B cell (primary cell): ENCODE measurements at regions of chr14 and their contacts with region 1.

Region 1: GRCh38 chr14:22822571-22823098 is 7.1 kb upstream of the MRPL52 start:
- DNase-seq: peak; percentile 87
- ATAC-seq: peak; percentile 67
- H3K4me3 ChIP-seq: peak overlapping the region; percentile 49 to 85 (median 56)
- H3K4me3 Mint-ChIP-seq: peak overlapping the region; percentile 88
- H3K27ac ChIP-seq: peak overlapping the region; percentile 65 to 71
- H3K27ac Mint-ChIP-seq: peak overlapping the region; percentile 94
- H3K4me1 ChIP-seq: peaks cover 31 to 47% of the 10 kb centered on the region in 2 donors
- H3K4me1 Mint-ChIP-seq: peaks cover 61% of the 10 kb centered on the region
- H3K27me3 ChIP-seq: no peaks in the 10 kb centered on the region
- H3K27me3 Mint-ChIP-seq: no peaks in the 10 kb centered on the region
- CTCF ChIP-seq: peak; percentile 82

Region 2: GRCh38 chr14:22713631-22713950 is 109.0 kb before region 1 on chr14:
- CTCF ChIA-PET with region 1: no interaction called
- POLR2A ChIA-PET with region 1: interaction called, 12 read pairs
- intact Hi-C with region 1: no loop called
- DNase-seq: no peak
- ATAC-seq: no peak
- H3K4me3 ChIP-seq: peak overlapping the region in 4 of 5 experiments; percentile 23 to 53 (median 45)
- H3K4me3 Mint-ChIP-seq: peak overlapping the region; percentile 90
- H3K27ac ChIP-seq: no peak overlapping the region
- H3K27ac Mint-ChIP-seq: no peak overlapping the region
- H3K4me1 ChIP-seq: peaks cover 5 to 6% of the 10 kb centered on the region in 2 donors
- H3K4me1 Mint-ChIP-seq: peaks cover 11% of the 10 kb centered on the region
- H3K27me3 ChIP-seq: peaks cover 0 to 21% (median 14%) of the 10 kb centered on the region in 4 experiments
- H3K27me3 Mint-ChIP-seq: peaks cover 33% of the 10 kb centered on the region
- CTCF ChIP-seq: no peak

Region 3: GRCh38 chr14:22766456-22767322 is 55.9 kb before region 1 on chr14 and contains the start of gene OXA1L:
- CTCF ChIA-PET with region 1: interaction called, 31 read pairs
- POLR2A ChIA-PET with region 1: no interaction called
- intact Hi-C with region 1: no loop called
- DNase-seq: peak; percentile 98
- ATAC-seq: peak; percentile 93
- H3K4me3 ChIP-seq: peak within 1 kb of the TSS; percentile 83 to 95 (median 92)
- H3K4me3 Mint-ChIP-seq: peak within 1 kb of the TSS; percentile 84
- H3K27ac ChIP-seq: peak within 1 kb of the TSS; percentile 84 to 89
- H3K27ac Mint-ChIP-seq: peak within 1 kb of the TSS; percentile 93
- H3K4me1 ChIP-seq: peaks cover 18 to 23% of the 10 kb centered on the region in 2 donors
- H3K4me1 Mint-ChIP-seq: peaks cover 34% of the 10 kb centered on the region
- H3K27me3 ChIP-seq: no peaks in the 10 kb centered on the region
- H3K27me3 Mint-ChIP-seq: no peaks in the 10 kb centered on the region
- CTCF ChIP-seq: no peak
- total RNA-seq, gene OXA1L: 186 and 201 TPM in 2 replicates

Region 4: DNA sequence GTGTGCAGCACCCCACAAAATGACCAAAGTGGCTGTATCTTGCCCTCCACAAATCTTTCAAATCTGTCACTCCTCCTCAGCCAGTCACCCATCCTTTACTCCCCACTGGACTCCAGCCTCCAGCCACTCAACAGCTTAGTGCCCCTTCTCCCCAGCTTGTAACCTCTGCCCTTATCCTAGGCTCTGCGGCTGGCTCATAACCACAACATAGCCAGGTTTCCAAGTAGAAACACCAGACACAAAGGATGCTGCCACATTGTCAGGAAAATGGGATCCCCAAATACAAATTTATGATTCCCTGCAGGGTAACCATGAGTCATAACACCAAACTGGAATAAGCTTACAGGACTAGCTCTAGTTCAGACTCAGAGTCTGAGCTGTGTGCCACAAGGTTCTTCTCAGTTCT is 41.0 kb before region 1 on chr14:
- CTCF ChIA-PET with region 1: interaction called, 14 read pairs
- POLR2A ChIA-PET with region 1: no interaction called
- intact Hi-C with region 1: loop called (anchors 2 kb)
- DNase-seq: no peak
- ATAC-seq: no peak
- H3K4me3 ChIP-seq: no peak overlapping the region
- H3K4me3 Mint-ChIP-seq: no peak overlapping the region
- H3K27ac ChIP-seq: no peak overlapping the region
- H3K27ac Mint-ChIP-seq: peak overlapping the region; percentile 71
- H3K4me1 ChIP-seq: peaks cover 0 to 5% of the 10 kb centered on the region in 2 donors
- H3K4me1 Mint-ChIP-seq: peaks cover 6% of the 10 kb centered on the region
- H3K27me3 ChIP-seq: no peaks in the 10 kb centered on the region
- H3K27me3 Mint-ChIP-seq: no peaks in the 10 kb centered on the region
- CTCF ChIP-seq: no peak

Region 5: GRCh38 chr14:22802860-22803686 is 19.6 kb before region 1 on chr14:
- CTCF ChIA-PET with region 1: interaction called, 129 read pairs
- POLR2A ChIA-PET with region 1: interaction called, 10 read pairs
- intact Hi-C with region 1: loop called (anchors 2 kb)
- DNase-seq: peak; percentile 55
- ATAC-seq: peak; percentile 85
- H3K4me3 ChIP-seq: peak overlapping the region in 1 of 5 experiments; percentile 5
- H3K4me3 Mint-ChIP-seq: peak overlapping the region; percentile 82
- H3K27ac ChIP-seq: peak overlapping the region; percentile 1 to 71
- H3K27ac Mint-ChIP-seq: peak overlapping the region; percentile 94
- H3K4me1 ChIP-seq: peaks cover 25 to 47% of the 10 kb centered on the region in 2 donors
- H3K4me1 Mint-ChIP-seq: peaks cover 79% of the 10 kb centered on the region
- H3K27me3 ChIP-seq: no peaks in the 10 kb centered on the region
- H3K27me3 Mint-ChIP-seq: no peaks in the 10 kb centered on the region
- CTCF ChIP-seq: no peak

Region 6: DNA sequence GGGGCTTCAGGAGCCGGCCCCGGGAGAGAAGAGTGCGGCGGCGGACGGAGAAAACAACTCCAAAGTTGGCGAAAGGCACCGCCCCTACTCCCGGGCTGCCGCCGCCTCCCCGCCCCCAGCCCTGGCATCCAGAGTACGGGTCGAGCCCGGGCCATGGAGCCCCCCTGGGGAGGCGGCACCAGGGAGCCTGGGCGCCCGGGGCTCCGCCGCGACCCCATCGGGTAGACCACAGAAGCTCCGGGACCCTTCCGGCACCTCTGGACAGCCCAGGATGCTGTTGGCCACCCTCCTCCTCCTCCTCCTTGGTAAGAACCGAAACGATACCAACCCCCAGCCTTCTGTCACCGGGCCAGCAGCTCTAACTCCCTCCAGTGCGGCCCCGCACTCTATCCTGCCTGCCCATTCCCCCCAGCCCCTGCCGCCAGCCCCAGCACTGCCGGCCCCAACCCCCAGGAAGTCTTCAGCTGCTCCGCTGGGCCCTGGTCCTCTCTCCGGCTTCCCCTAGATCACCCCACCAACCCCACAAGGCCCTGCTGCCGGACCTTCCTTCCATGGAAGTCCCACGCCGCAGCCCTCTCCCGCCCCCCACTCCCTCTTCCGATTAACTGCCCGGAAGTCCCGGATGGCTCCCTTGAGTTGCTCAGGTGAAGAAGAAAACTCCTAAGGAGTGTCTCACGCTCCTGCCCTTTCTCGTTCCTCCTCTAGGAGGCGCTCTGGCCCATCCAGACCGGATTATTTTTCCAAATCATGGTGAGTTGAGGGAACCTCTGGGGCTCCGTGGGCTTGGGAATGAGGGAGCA is 49.6 kb after region 1 on chr14:
- CTCF ChIA-PET with region 1: interaction called, 13 read pairs
- POLR2A ChIA-PET with region 1: no interaction called
- intact Hi-C with region 1: loop called (anchors 2 kb)
- DNase-seq: peak; percentile 83
- ATAC-seq: peak; percentile 22
- H3K4me3 ChIP-seq: peak overlapping the region; percentile 79 to 97 (median 92)
- H3K4me3 Mint-ChIP-seq: peak overlapping the region; percentile 96
- H3K27ac ChIP-seq: peak overlapping the region; percentile 84 to 88
- H3K27ac Mint-ChIP-seq: peak overlapping the region; percentile 98
- H3K4me1 ChIP-seq: peaks cover 19 to 35% of the 10 kb centered on the region in 2 donors
- H3K4me1 Mint-ChIP-seq: peaks cover 34% of the 10 kb centered on the region
- H3K27me3 ChIP-seq: no peaks in the 10 kb centered on the region
- H3K27me3 Mint-ChIP-seq: no peaks in the 10 kb centered on the region
- CTCF ChIP-seq: peak; percentile 90

Region 7: GRCh38 chr14:22900081-22900799 is 77.6 kb after region 1 on chr14:
- CTCF ChIA-PET with region 1: interaction called, 21 read pairs
- POLR2A ChIA-PET with region 1: interaction called, 4 read pairs
- intact Hi-C with region 1: loop called (anchors 1 kb)
- DNase-seq: peak; percentile 81
- ATAC-seq: peak; percentile 76
- H3K4me3 ChIP-seq: no peak overlapping the region
- H3K4me3 Mint-ChIP-seq: no peak overlapping the region
- H3K27ac ChIP-seq: peak overlapping the region in 1 of 2 donors; percentile 38
- H3K27ac Mint-ChIP-seq: peak overlapping the region; percentile 10
- H3K4me1 ChIP-seq: peaks cover 3 to 6% of the 10 kb centered on the region in 2 donors
- H3K4me1 Mint-ChIP-seq: peaks cover 7% of the 10 kb centered on the region
- H3K27me3 ChIP-seq: no peaks in the 10 kb centered on the region
- H3K27me3 Mint-ChIP-seq: no peaks in the 10 kb centered on the region
- CTCF ChIP-seq: peak; percentile 71